Ascending aorta (tissue), 2 donors: ENCODE measurements at regions of chr1 and their contacts with region 1.

Region 1: GRCh38 chr1:110630839-110631663 is 24.9 kb upstream of the KCNA2 start:
- DNase-seq: peak in 1 of 2 donors; percentile 78
- H3K4me3 ChIP-seq: no peak overlapping the region
- H3K27ac ChIP-seq: no peak overlapping the region
- H3K4me1 ChIP-seq: peaks cover 0 to 8% of the 10 kb centered on the region in 2 donors
- H3K27me3 ChIP-seq: no peaks in the 10 kb centered on the region
- CTCF ChIP-seq: peak; percentile 63 to 78 (median 69)

Region 2: GRCh38 chr1:110594456-110595352 is 36.3 kb before region 1 on chr1:
- intact Hi-C with region 1: no loop called
- DNase-seq: peak in 1 of 2 donors; percentile 11
- H3K4me3 ChIP-seq: no peak overlapping the region
- H3K27ac ChIP-seq: no peak overlapping the region
- H3K4me1 ChIP-seq: no peaks in the 10 kb centered on the region
- H3K27me3 ChIP-seq: no peaks in the 10 kb centered on the region
- CTCF ChIP-seq: no peak

Region 3: GRCh38 chr1:110746579-110747160 is 115.6 kb after region 1 on chr1:
- intact Hi-C with region 1: no loop called
- DNase-seq: no peak
- H3K4me3 ChIP-seq: no peak overlapping the region
- H3K27ac ChIP-seq: no peak overlapping the region
- H3K4me1 ChIP-seq: no peaks in the 10 kb centered on the region
- H3K27me3 ChIP-seq: no peaks in the 10 kb centered on the region
- CTCF ChIP-seq: no peak

Region 4: DNA sequence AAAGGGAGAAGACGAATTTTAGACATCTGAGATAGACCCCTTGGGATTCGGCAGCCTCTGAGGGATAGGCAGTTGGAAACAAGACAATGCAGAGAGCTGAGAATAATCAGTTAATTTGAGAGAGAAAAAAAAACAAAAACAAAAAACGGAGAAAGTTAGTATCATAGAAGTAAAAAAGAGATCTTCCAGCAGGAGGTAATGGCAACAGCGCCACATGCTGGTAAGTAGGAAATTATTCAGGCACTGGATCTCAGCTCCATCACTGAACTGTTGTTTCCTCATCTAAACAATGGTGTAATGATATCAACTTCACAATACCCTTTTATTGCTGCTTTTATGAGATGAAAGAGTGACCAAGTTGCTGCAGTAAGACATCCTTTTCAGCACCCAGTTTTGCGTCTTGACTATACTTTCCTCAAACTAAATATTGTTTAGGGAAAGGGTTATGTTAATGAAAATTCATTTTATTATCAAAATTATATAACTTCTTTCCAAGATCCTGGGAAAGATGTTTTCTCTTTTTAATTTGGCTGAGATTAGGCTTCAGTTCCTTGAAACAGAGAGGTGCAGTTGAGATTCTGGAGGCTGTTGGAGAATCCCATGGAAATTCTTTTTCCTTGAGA is 135.1 kb after region 1 on chr1:
- intact Hi-C with region 1: loop called (anchors 5 kb)
- DNase-seq: no peak
- H3K4me3 ChIP-seq: no peak overlapping the region
- H3K27ac ChIP-seq: no peak overlapping the region
- H3K4me1 ChIP-seq: no peaks in the 10 kb centered on the region
- H3K27me3 ChIP-seq: no peaks in the 10 kb centered on the region
- CTCF ChIP-seq: peak; percentile 43 to 71 (median 59)

Region 5: DNA sequence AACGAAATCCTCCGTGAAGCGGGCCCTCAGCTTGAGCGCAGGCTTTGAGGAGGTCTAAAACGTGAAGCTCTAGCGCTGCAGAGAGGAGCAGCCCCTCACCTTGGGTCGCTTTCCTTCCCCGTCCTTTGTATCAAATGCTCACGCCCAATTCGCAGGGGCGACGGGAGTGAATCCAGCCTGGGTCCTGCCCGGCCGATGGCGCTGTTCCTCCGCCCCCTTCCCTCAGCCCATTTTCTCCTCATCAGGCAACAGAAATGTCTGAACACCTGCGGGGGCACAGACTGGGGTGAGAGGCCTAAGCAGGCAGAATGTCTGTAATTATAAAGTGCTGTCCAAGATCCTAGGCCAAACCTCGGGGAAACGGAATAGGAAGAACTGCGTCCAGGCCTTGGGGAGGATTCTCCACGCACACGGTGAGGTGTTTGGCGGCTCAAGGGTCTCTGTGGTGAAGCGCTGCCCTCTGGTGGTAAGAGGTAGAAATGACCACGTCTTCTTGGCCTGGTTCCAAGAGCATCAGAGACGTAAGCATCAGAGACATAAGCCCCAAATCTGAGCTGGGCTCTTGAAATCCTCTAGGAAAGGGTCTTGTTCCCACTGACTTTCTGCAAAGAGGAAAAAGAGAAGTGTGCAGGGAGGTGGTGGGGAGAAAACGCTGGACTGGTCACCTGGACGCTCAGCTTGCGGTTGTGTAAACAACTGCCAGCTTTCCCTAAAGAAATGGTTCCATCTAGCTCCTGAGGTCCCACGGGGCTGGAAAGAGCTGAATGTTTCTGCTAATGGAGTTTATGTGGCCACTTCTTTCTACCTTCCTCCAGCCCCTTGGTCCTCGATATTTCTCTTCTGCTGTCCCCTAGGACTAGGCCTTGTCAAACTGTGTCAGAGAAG is 149.8 kb after region 1 on chr1:
- intact Hi-C with region 1: loop called (anchors 5 kb)
- DNase-seq: peak in 1 of 2 donors; percentile 74
- H3K4me3 ChIP-seq: no peak overlapping the region
- H3K27ac ChIP-seq: no peak overlapping the region
- H3K4me1 ChIP-seq: no peaks in the 10 kb centered on the region
- H3K27me3 ChIP-seq: no peaks in the 10 kb centered on the region
- CTCF ChIP-seq: peak in 2 of 3 experiments; percentile 61 to 65